ENCODE measurements at regions of chr4 and their contacts with region 1.

Region 1: DNA sequence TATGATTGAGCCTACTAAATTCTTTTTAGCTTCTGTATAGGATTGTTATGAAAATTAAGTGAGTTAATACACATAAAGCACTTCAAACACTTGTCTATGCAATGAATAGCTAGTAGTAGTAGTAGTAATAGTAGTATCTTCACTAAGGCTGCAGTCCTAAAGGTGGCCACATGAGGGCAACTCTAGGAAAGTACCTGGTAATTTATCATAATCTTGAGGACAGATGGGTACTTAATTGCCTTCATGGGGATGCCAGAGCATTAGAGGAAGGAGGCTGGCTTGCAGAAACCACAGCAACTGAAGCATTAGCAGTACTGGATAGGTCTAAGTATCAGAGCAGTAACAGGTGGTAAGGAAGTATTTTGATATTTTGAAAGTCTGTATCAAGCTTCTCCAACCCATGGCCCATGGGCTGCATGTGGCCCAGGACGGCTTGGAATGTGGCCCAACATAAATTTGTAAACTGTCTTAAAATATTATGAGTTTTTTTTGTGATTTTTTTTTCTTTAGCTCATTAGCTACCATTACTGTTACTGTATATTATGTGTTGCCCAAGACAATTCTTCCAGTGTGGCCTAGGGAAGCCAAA is 17.3 kb downstream of the NIPAL1 start:
- DNase-seq: peak; percentile 79
- ATAC-seq: peak; percentile 80
- H3K4me3 Mint-ChIP-seq: no peak overlapping the region
- H3K27ac Mint-ChIP-seq: no peak overlapping the region
- H3K4me1 Mint-ChIP-seq: peaks cover 21% of the 10 kb centered on the region
- H3K27me3 Mint-ChIP-seq: peaks cover 3% of the 10 kb centered on the region

Region 2: GRCh38 chr4:47359891-47360290 is 674.0 kb before region 1 on chr4:
- CTCF ChIA-PET with region 1: no interaction called
- POLR2A ChIA-PET with region 1: no interaction called
- DNase-seq: no peak
- ATAC-seq: no peak
- H3K4me3 Mint-ChIP-seq: no peak overlapping the region
- H3K27ac Mint-ChIP-seq: no peak overlapping the region
- H3K4me1 Mint-ChIP-seq: no peaks in the 10 kb centered on the region
- H3K27me3 Mint-ChIP-seq: peaks cover 22% of the 10 kb centered on the region

Region 3: GRCh38 chr4:47733302-47734175 is 300.4 kb before region 1 on chr4:
- CTCF ChIA-PET with region 1: no interaction called
- POLR2A ChIA-PET with region 1: no interaction called
- DNase-seq: no peak
- ATAC-seq: no peak
- H3K4me3 Mint-ChIP-seq: no peak overlapping the region
- H3K27ac Mint-ChIP-seq: no peak overlapping the region
- H3K4me1 Mint-ChIP-seq: no peaks in the 10 kb centered on the region
- H3K27me3 Mint-ChIP-seq: peaks cover 9% of the 10 kb centered on the region

Region 4: GRCh38 chr4:48002267-48002666 is 31.7 kb before region 1 on chr4:
- CTCF ChIA-PET with region 1: interaction called, 12 read pairs
- POLR2A ChIA-PET with region 1: no interaction called
- DNase-seq: no peak
- ATAC-seq: no peak
- H3K4me3 Mint-ChIP-seq: no peak overlapping the region
- H3K27ac Mint-ChIP-seq: no peak overlapping the region
- H3K4me1 Mint-ChIP-seq: no peaks in the 10 kb centered on the region
- H3K27me3 Mint-ChIP-seq: no peaks in the 10 kb centered on the region

Region 5: GRCh38 chr4:48047421-48047844 is 13.5 kb after region 1 on chr4:
- CTCF ChIA-PET with region 1: interaction called, 47 read pairs
- POLR2A ChIA-PET with region 1: no interaction called
- DNase-seq: peak; percentile 91
- ATAC-seq: peak; percentile 92
- H3K4me3 Mint-ChIP-seq: peak overlapping the region; percentile 62
- H3K27ac Mint-ChIP-seq: peak overlapping the region; percentile 77
- H3K4me1 Mint-ChIP-seq: peaks cover 56% of the 10 kb centered on the region
- H3K27me3 Mint-ChIP-seq: peaks cover 27% of the 10 kb centered on the region

Region 6: GRCh38 chr4:48085821-48086607 is 52.1 kb after region 1 on chr4:
- CTCF ChIA-PET with region 1: interaction called, 45 read pairs
- POLR2A ChIA-PET with region 1: no interaction called
- DNase-seq: no peak
- ATAC-seq: no peak
- H3K4me3 Mint-ChIP-seq: no peak overlapping the region
- H3K27ac Mint-ChIP-seq: no peak overlapping the region
- H3K4me1 Mint-ChIP-seq: peaks cover 3% of the 10 kb centered on the region
- H3K27me3 Mint-ChIP-seq: no peaks in the 10 kb centered on the region

Region 7: DNA sequence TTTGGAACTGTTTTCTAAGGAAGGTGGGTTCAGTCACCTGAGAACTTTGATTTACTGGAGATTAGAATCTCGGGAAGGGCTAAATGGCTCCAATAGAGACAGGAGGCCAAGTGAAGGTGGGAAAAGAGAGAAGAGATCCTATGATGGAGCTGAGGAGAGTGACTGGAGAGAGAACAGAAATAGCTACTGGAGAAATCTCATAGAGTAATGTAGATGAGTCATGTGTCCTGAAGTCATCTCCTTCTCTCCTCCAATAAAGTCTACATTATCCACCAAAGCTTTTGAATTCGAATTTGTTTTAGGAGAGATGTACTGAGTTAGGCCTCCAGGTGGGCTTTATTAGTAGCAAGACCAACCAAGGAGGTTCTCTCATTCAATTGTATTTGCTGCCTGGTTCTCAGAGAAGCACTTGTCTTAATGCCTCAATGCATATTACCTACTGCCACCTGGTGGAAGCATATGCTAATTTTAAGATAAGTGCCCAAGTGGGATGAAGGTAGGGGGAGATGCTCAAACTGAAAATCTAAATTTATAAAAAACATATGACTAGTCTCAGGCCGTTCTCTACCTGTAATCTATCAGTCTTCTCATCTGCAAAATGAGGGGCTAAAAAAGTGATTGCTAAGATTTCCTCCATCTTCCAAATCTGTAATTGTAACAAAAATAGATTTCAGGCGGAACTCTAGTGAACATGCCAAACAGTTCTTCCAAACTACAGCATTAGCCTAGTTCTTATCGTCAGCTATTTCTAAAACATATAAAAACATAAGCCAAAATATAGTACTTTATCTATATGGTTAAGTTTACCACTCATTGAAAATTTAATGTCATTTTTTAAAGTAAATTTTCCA is 75.7 kb after region 1 on chr4:
- CTCF ChIA-PET with region 1: interaction called, 10 read pairs
- POLR2A ChIA-PET with region 1: no interaction called
- DNase-seq: peak; percentile 57
- ATAC-seq: peak; percentile 73
- H3K4me3 Mint-ChIP-seq: no peak overlapping the region
- H3K27ac Mint-ChIP-seq: no peak overlapping the region
- H3K4me1 Mint-ChIP-seq: peaks cover 43% of the 10 kb centered on the region
- H3K27me3 Mint-ChIP-seq: no peaks in the 10 kb centered on the region

Region 8: DNA sequence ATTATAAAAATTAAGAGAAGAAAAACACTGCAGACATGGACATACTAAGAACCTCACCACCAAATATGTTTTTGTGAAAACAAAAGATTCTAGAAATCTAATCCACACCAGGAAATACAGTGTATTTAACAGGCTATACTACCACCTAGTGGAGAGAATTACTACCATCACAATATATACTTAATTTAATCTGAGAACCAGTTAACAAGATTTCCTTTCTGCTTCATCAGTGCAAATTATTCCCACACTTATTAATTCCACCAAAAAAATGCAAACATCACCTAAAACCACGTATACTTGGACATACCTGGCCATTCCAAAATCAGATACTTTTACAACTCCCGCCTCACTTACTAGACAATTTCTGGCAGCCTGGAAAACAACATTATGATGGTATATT is 107.1 kb after region 1 on chr4:
- CTCF ChIA-PET with region 1: interaction called, 25 read pairs
- POLR2A ChIA-PET with region 1: no interaction called
- DNase-seq: no peak
- ATAC-seq: no peak
- H3K4me3 Mint-ChIP-seq: no peak overlapping the region
- H3K27ac Mint-ChIP-seq: no peak overlapping the region
- H3K4me1 Mint-ChIP-seq: peaks cover 49% of the 10 kb centered on the region
- H3K27me3 Mint-ChIP-seq: no peaks in the 10 kb centered on the region

Region 9: DNA sequence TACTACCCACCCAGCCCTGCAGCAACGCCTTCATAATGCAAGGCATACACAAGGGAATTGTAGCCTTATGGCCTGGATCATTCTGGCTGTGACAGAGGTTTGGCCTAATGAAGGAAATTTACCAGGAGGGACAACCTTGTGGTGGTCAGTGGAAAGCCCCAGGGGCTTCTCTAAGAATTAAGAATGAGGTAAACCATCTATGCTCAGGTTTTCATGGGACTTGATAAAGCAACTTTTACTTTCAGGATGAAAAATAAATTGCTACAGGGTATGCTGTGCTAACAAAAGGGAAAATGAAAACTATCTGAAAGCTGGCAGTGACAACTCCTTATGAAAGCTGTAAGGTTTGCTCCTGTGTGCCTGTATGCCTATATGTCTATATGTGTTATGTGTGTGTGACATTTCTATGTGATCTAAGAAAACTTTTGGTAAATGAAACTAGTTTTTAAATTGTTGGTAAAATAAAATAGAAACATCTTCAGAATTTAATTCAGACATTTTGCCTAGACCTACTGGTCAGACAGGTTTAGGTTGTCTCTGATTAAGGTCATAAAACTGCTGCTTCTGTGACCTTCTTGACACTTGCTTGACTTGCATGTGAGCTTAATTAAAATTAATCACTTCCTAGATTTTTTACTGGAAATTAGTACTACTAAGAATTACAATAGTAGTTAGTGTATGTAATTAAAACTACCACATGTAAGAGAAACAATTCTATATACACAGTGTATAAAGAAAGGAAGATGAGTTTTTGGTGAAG is 120.1 kb after region 1 on chr4:
- CTCF ChIA-PET with region 1: no interaction called
- POLR2A ChIA-PET with region 1: no interaction called
- DNase-seq: no peak
- ATAC-seq: no peak
- H3K4me3 Mint-ChIP-seq: no peak overlapping the region
- H3K27ac Mint-ChIP-seq: no peak overlapping the region
- H3K4me1 Mint-ChIP-seq: no peaks in the 10 kb centered on the region
- H3K27me3 Mint-ChIP-seq: no peaks in the 10 kb centered on the region

Region 10: DNA sequence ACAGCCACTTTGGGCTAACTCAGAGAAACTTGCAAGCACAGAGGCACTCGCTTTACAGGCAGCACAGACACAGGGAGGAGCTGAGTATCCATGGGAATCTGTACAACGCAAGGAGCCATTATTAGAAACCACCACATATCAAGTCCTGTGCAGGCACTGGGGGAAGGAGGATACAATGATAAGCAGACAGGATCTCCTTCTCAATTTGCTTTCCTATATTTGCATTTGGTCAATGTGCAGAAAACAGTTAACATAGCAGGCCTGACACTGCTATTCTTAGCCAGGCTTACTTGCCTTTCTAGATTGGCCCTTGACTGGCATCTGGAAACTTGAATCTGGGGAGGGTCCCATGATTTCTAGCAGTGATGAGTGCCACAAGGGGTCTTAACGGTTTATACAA is 169.9 kb after region 1 on chr4:
- CTCF ChIA-PET with region 1: no interaction called
- POLR2A ChIA-PET with region 1: no interaction called
- DNase-seq: no peak
- ATAC-seq: no peak
- H3K4me3 Mint-ChIP-seq: no peak overlapping the region
- H3K27ac Mint-ChIP-seq: no peak overlapping the region
- H3K4me1 Mint-ChIP-seq: no peaks in the 10 kb centered on the region
- H3K27me3 Mint-ChIP-seq: no peaks in the 10 kb centered on the region